Right ventricle myocardium inferior (tissue), 1 donor: ENCODE measurements at regions of chr19 and their contacts with region 1.

Region 1: GRCh38 chr19:15629003-15629880 is 11.5 kb upstream of the CYP4F3 start:
- DNase-seq: peak; percentile 92
- ATAC-seq: peak; percentile 81

Region 2: DNA sequence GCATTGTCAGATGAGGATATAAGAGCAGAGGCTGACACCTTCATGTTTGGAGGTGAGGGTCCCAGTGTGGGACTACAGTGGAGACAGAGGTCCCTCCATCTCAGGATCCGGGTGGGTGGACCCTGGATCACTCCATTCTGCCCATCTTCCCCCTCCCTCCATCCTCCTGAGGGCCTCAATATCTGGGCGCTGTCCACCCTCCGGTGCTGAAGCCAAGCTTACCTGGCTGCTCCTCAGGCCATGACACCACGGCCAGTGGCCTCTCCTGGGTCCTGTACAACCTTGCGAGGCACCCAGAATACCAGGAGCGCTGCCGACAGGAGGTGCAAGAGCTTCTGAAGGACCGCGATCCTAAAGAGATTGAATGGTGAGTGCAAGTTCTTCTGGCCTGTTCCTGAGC is 55.6 kb after region 1 on chr19:
- intact Hi-C with region 1: no loop called
- DNase-seq: no peak
- ATAC-seq: no peak

Region 3: GRCh38 chr19:15759962-15760565 is 130.8 kb after region 1 on chr19:
- intact Hi-C with region 1: loop called (anchors 5 kb)
- DNase-seq: no peak
- ATAC-seq: no peak

Region 4: DNA sequence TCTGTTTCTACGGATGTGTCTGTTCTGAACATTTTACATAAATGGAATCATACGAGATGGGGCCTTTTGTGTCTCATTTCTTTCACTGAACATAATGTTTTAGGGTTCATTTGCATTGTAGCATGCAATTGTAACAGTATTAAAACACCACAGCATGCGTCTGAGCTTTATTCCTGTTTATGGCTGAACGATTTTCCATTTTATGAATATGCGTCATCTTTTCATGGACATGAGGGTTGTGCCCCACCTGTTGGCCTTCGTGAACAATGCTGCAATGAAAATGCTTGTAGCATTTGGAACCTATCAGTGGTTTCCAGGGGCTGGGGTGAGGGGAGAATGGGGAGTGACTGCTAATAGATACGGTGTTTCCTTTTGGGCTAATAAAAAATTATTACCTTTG is 181.1 kb after region 1 on chr19:
- intact Hi-C with region 1: loop called (anchors 1 kb)
- DNase-seq: no peak
- ATAC-seq: no peak

Region 5: GRCh38 chr19:15869109-15869555 is 239.9 kb after region 1 on chr19:
- intact Hi-C with region 1: loop called (anchors 1 kb)
- DNase-seq: no peak
- ATAC-seq: peak; percentile 44